Breast epithelium (tissue), 4 donors: ENCODE measurements at regions of chr2 and their contacts with region 1.

Region 1: GRCh38 chr2:62038975-62039771 is 133.7 kb downstream of the COMMD1 start:
- DNase-seq: no peak
- H3K4me3 ChIP-seq: no peak overlapping the region
- H3K27ac ChIP-seq: no peak overlapping the region
- H3K4me1 ChIP-seq: no peaks in the 10 kb centered on the region
- H3K27me3 ChIP-seq: no peaks in the 10 kb centered on the region
- CTCF ChIP-seq: no peak
- POLR2A ChIP-seq: no peak

Region 2: DNA sequence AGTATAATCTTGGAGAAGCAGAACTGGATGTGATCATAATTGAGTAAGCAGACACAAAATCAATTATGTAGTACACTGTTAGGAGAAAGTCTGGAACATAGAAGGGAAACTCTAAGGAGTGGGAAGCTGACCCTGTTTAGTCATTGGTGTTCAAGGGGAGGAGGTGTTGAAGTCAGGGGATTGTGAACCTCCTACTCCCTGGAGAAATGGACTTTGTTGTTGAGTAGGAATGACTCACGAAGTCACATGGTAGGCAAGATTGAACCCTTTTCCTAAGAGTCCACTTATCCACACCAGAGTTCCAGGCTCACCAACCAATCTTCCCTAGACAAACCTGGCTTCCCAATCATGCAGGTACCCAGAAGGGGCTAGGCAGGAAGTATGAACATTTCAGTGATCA is 1404.7 kb before region 1 on chr2:
- intact Hi-C with region 1: no loop called
- DNase-seq: no peak
- H3K4me3 ChIP-seq: no peak overlapping the region
- H3K27ac ChIP-seq: no peak overlapping the region
- H3K4me1 ChIP-seq: peaks cover 0 to 6% of the 10 kb centered on the region in 2 donors
- H3K27me3 ChIP-seq: no peaks in the 10 kb centered on the region
- CTCF ChIP-seq: no peak
- POLR2A ChIP-seq: no peak

Region 3: GRCh38 chr2:62163106-62163831 is 124.1 kb after region 1 on chr2:
- intact Hi-C with region 1: loop called (anchors 10 kb)
- DNase-seq: no peak
- H3K4me3 ChIP-seq: no peak overlapping the region
- H3K27ac ChIP-seq: no peak overlapping the region
- H3K4me1 ChIP-seq: no peaks in the 10 kb centered on the region
- H3K27me3 ChIP-seq: no peaks in the 10 kb centered on the region
- CTCF ChIP-seq: no peak
- POLR2A ChIP-seq: no peak

Region 4: GRCh38 chr2:62266433-62267038 is 227.4 kb after region 1 on chr2:
- intact Hi-C with region 1: loop called (anchors 10 kb)
- DNase-seq: no peak
- H3K4me3 ChIP-seq: no peak overlapping the region
- H3K27ac ChIP-seq: peak overlapping the region in 1 of 2 donors; percentile 7
- H3K4me1 ChIP-seq: no peaks in the 10 kb centered on the region
- H3K27me3 ChIP-seq: no peaks in the 10 kb centered on the region
- CTCF ChIP-seq: no peak
- POLR2A ChIP-seq: no peak

Region 5: DNA sequence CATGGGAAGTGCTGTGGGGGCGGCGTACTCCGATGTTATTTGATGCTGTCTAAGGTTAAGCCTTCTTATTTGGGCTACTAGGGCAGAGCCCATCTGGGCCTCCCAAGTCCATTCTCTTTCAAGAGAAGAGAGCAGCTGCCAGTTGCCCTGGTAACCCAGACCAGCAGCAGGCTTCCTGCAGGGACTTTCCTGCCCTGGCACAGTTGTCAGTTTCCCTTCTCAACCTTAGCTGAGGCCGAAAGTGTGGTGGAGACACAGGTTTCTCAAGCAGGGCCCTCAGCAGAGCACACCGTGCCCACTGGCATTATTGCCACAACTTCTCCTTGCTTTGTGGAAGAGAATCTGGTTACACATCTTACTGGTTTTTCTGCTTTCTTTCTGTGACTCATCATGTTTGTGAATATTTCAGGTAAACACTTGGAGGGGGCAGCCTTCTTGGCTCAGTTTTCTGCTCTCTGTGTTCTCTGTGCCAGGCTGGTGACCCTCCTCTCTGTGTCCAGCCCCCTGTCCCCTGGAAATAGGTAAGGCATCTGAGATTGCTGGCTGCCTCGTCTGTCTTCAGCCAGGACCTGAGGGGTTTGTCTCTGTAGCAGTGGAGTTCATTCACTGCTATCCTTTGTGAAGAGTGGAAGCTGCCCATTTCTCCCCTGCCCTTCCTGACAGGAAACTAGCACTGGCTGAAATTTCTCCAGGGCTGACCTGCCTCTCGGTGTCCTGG is 267.7 kb after region 1 on chr2:
- intact Hi-C with region 1: no loop called
- DNase-seq: peak; percentile 71 to 84
- H3K4me3 ChIP-seq: no peak overlapping the region
- H3K27ac ChIP-seq: peak overlapping the region; percentile 93 to 94
- H3K4me1 ChIP-seq: peaks cover 0 to 24% of the 10 kb centered on the region in 2 donors
- H3K27me3 ChIP-seq: no peaks in the 10 kb centered on the region
- CTCF ChIP-seq: no peak
- POLR2A ChIP-seq: no peak